CD4-positive, alpha-beta T cell (primary cell): ENCODE measurements at regions of chr3 and their contacts with region 1.

Region 1: DNA sequence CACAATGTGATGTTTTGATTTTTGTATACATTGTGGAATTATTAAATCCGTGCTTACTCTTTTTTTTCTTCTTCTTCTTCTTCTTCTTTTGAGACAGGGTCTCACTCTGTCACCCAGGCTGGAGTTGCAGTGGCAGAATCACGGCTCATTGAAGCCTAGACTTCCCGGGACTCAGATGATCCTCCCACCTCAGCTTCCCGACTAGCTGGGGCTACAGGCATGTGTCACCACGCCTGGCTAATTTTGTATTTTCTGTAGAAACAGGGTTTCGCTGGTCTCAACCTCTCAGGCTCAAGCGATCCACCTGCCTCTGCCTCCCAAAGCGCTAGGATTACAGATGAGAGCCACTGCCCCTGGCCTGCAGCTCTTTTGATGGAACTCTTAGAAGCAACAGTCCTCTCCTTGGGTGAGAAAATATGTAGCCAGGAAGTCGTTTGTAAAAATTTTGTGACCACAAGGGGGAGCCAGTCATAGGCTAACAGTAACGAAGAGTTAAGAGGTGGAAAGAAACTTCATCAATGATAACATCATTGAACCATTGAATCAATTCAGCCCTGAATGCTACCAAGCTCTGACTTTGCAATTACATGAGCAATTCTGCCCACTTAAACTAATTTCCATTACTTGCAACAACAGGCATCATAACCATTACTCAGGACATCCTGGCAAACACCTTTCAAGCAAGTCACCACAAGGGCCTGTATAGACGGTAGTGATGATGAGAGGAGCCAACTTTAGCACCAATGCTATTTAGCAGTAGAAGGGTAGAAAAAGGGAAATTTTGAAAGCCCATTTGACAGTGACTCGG is 16.7 kb upstream of the CMTM7 start:
- DNase-seq: peak in 13 of 14 experiments; percentile 17 to 89 (median 62)
- ATAC-seq: peak; percentile 33
- H3K4me3 ChIP-seq: no peak overlapping the region
- H3K4me3 Mint-ChIP-seq: no peak overlapping the region
- H3K27ac ChIP-seq: no peak overlapping the region
- H3K27ac Mint-ChIP-seq: peak overlapping the region; percentile 76
- H3K4me1 ChIP-seq: peaks cover 32% of the 10 kb centered on the region
- H3K4me1 Mint-ChIP-seq: peaks cover 40% of the 10 kb centered on the region
- H3K27me3 ChIP-seq: no peaks in the 10 kb centered on the region
- H3K27me3 Mint-ChIP-seq: no peaks in the 10 kb centered on the region
- CTCF ChIP-seq: peak; percentile 75

Region 2: DNA sequence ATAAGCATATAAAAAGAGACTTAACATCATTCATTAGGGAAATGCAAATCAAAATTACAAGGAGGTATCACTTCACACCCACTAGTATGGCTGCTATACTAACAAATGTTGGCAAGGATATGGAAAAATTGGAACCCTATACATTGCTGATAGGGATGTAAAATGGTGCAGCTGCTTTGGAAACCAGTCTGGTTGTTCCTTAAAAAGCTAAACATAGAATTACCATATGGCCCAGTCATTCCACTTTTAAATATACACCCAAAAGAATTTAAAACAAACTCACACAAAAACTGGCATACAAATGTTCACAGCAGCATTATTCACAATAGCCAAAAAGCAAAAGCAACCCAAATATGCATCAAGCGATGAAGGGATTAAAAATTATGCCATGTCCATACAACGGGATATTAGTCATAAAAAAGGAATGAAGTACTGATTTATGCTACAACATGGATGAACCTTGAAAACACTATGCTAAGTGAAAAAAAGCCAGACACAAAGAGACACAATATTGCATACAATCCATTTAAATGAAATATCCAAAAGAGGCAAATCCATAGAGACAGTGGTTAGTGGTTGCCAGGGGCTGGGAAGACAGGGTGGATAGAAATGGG is 512.2 kb before region 1 on chr3:
- CTCF ChIA-PET with region 1: no interaction called
- POLR2A ChIA-PET with region 1: no interaction called
- intact Hi-C with region 1: no loop called
- DNase-seq: no peak
- ATAC-seq: no peak
- H3K4me3 ChIP-seq: no peak overlapping the region
- H3K4me3 Mint-ChIP-seq: no peak overlapping the region
- H3K27ac ChIP-seq: no peak overlapping the region
- H3K27ac Mint-ChIP-seq: no peak overlapping the region
- H3K4me1 ChIP-seq: no peaks in the 10 kb centered on the region
- H3K4me1 Mint-ChIP-seq: no peaks in the 10 kb centered on the region
- H3K27me3 ChIP-seq: no peaks in the 10 kb centered on the region
- H3K27me3 Mint-ChIP-seq: no peaks in the 10 kb centered on the region
- CTCF ChIP-seq: no peak

Region 3: DNA sequence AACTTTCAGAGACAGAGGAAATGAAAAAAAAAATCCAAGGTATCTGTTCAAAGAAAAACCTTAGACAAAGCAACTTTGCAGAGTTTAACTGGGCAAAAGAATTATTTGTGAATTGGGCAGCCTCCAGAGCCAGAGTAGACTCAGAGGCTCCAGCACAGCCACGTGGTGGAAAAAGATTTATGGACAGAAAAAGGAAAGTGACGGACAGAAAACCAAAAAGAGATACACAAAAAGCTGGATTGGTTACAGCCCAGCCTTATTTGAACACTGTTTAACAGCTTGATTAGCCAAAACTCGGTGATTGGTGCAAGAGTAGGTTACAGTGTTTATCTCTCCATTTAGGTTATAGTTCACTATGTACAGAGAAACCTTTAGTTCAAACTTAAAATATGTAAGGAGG is 292.3 kb before region 1 on chr3:
- CTCF ChIA-PET with region 1: no interaction called
- POLR2A ChIA-PET with region 1: no interaction called
- intact Hi-C with region 1: no loop called
- DNase-seq: no peak
- ATAC-seq: no peak
- H3K4me3 ChIP-seq: no peak overlapping the region
- H3K4me3 Mint-ChIP-seq: no peak overlapping the region
- H3K27ac ChIP-seq: no peak overlapping the region
- H3K27ac Mint-ChIP-seq: no peak overlapping the region
- H3K4me1 ChIP-seq: no peaks in the 10 kb centered on the region
- H3K4me1 Mint-ChIP-seq: no peaks in the 10 kb centered on the region
- H3K27me3 ChIP-seq: no peaks in the 10 kb centered on the region
- H3K27me3 Mint-ChIP-seq: no peaks in the 10 kb centered on the region
- CTCF ChIP-seq: no peak

Region 4: GRCh38 chr3:32296256-32297204 is 78.5 kb before region 1 on chr3:
- CTCF ChIA-PET with region 1: no interaction called
- POLR2A ChIA-PET with region 1: interaction called, 16 read pairs
- intact Hi-C with region 1: loop called in 1 of 2 experiments (anchors 1 kb)
- DNase-seq: peak; percentile 52 to 88 (median 60)
- ATAC-seq: peak; percentile 62
- H3K4me3 ChIP-seq: no peak overlapping the region
- H3K4me3 Mint-ChIP-seq: peak overlapping the region; percentile 76
- H3K27ac ChIP-seq: peak overlapping the region; percentile 60
- H3K27ac Mint-ChIP-seq: peak overlapping the region; percentile 93
- H3K4me1 ChIP-seq: peaks cover 44% of the 10 kb centered on the region
- H3K4me1 Mint-ChIP-seq: peaks cover 43% of the 10 kb centered on the region
- H3K27me3 ChIP-seq: no peaks in the 10 kb centered on the region
- H3K27me3 Mint-ChIP-seq: no peaks in the 10 kb centered on the region
- CTCF ChIP-seq: peak; percentile 93

Region 5: DNA sequence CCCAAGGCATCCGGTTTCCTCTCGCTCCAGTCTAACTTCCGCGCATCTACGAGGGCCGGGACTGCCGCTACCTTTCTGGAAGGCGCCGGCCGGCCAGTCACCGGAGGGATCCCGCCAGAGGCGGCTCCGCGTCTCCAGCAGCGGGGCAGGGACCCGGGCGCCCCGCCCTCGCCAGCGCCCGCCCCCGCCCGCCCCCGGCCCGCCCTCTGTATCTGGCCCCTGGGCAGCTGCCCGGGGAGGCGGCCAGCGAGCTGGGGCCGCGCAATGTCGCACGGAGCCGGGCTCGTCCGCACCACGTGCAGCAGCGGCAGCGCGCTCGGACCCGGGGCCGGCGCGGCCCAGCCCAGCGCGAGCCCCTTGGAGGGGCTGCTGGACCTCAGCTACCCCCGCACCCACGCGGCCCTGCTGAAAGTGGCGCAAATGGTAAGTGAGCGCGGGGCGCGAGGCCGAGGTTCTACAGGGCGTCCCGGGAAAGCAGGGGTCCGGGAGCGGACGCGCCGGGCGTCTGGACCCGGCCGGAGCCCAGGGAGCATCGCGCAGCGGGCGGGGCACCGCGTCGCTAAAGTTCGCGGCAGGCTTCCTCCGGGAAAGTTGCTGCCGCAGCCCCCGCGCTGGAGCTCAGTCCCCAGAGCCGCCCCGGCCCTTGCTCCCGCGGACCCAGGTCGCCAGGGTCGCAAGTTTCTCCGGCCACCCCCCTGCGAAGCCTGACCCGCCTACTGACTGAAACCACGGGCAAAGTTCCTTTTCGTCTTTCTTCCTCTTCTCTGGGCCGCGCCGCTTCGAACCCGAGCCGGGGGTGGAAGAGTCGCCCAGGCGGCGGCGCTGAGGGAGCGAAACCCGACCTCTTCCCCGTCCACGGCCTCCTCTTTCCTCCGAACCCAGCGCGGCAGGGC is 16.9 kb after region 1 on chr3 and contains the start of gene CMTM7:
- CTCF ChIA-PET with region 1: interaction called, 6 read pairs
- POLR2A ChIA-PET with region 1: interaction called, 26 read pairs
- intact Hi-C with region 1: loop called in 1 of 2 experiments (anchors 2 kb)
- DNase-seq: peak; percentile 32 to 81 (median 52)
- ATAC-seq: peak; percentile 54
- H3K4me3 ChIP-seq: peak within 1 kb of the TSS; percentile 92
- H3K4me3 Mint-ChIP-seq: peak within 1 kb of the TSS; percentile 97
- H3K27ac ChIP-seq: peak within 1 kb of the TSS; percentile 77 to 79
- H3K27ac Mint-ChIP-seq: peak within 1 kb of the TSS; percentile 91
- H3K4me1 ChIP-seq: peaks cover 47% of the 10 kb centered on the region
- H3K4me1 Mint-ChIP-seq: peaks cover 61% of the 10 kb centered on the region
- H3K27me3 ChIP-seq: no peaks in the 10 kb centered on the region
- H3K27me3 Mint-ChIP-seq: no peaks in the 10 kb centered on the region
- CTCF ChIP-seq: no peak
- total RNA-seq, gene CMTM7: 31.5 to 35.2 TPM

Region 6: DNA sequence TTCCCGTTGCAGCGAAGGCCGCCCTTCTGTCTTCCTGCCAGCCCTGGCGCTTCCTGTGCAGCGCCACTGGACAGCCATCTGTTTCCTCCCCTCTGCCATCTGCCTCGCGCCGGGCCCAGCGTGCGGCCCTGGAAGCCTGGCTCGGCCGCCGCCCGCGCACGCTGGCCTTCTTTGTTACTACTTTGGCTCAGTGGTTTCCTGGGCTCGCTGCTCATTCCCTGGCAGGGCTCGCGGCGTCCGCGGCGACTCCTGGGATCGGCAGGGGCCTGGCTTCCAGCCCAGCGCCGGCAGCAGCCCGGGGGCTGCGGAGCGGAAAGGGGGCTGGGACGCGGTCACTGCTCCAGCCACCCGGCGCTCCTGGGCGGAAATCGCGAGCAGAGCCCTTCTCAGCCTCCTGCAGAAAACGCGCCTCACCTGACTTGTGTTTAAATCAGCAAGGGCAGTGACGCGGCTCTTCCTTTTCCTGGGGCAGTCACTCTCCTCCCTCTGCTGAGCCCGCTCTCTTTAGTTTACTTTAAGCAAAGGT is 26.6 kb after region 1 on chr3:
- CTCF ChIA-PET with region 1: interaction called, 5 read pairs
- POLR2A ChIA-PET with region 1: interaction called, 8 read pairs
- intact Hi-C with region 1: loop called in 1 of 2 experiments (anchors 1 kb)
- DNase-seq: peak; percentile 37 to 84 (median 58)
- ATAC-seq: peak; percentile 73
- H3K4me3 ChIP-seq: peak overlapping the region; percentile 65
- H3K4me3 Mint-ChIP-seq: peak overlapping the region; percentile 92
- H3K27ac ChIP-seq: peak overlapping the region; percentile 85 to 92
- H3K27ac Mint-ChIP-seq: peak overlapping the region; percentile 90
- H3K4me1 ChIP-seq: peaks cover 62% of the 10 kb centered on the region
- H3K4me1 Mint-ChIP-seq: peaks cover 77% of the 10 kb centered on the region
- H3K27me3 ChIP-seq: no peaks in the 10 kb centered on the region
- H3K27me3 Mint-ChIP-seq: no peaks in the 10 kb centered on the region
- CTCF ChIP-seq: no peak

Region 7: DNA sequence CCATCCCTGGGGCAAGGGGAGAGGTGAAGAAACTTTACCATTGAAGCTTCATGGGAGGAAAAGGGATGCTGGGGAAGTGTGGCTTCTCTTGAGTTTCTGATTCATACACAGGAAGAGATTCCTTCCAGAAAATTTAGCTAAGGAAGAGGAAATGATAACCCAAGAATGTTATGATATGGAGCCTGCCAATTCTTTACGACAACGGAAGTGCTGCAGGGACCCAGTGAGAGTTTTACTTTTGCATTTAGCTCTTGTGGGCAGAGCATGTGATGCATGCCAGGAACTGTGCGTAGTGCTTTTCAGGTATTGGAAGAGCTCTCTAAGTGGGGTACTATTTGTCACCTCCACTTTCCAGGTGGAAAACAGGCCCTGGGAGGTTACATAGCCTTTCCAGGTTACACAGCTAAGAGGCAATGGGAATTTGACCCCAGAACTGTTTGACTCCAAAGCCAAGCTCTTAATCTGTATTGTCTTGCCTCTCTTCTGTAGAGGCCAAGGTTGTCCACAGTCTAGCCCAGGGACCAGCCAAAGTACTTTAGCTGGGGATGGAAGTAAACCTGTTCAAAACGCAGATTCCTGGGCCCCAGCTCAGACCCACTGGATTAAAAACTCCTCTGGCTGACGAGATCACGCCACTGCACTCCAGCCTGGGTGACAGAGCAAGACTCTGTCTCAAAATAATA is 39.7 kb after region 1 on chr3:
- CTCF ChIA-PET with region 1: no interaction called
- POLR2A ChIA-PET with region 1: interaction called, 13 read pairs
- intact Hi-C with region 1: loop called in 1 of 2 experiments (anchors 5 kb)
- DNase-seq: peak in 10 of 14 experiments; percentile 34 to 86 (median 52)
- ATAC-seq: peak; percentile 95
- H3K4me3 ChIP-seq: no peak overlapping the region
- H3K4me3 Mint-ChIP-seq: peak overlapping the region; percentile 43
- H3K27ac ChIP-seq: peak overlapping the region; percentile 39 to 76
- H3K27ac Mint-ChIP-seq: peak overlapping the region; percentile 95
- H3K4me1 ChIP-seq: peaks cover 41% of the 10 kb centered on the region
- H3K4me1 Mint-ChIP-seq: peaks cover 83% of the 10 kb centered on the region
- H3K27me3 ChIP-seq: no peaks in the 10 kb centered on the region
- H3K27me3 Mint-ChIP-seq: no peaks in the 10 kb centered on the region
- CTCF ChIP-seq: no peak

Region 8: GRCh38 chr3:32428092-32429068 is 53.4 kb after region 1 on chr3:
- CTCF ChIA-PET with region 1: interaction called, 5 read pairs
- POLR2A ChIA-PET with region 1: interaction called, 10 read pairs
- intact Hi-C with region 1: no loop called
- DNase-seq: peak in 12 of 14 experiments; percentile 18 to 81 (median 43)
- ATAC-seq: peak; percentile 58
- H3K4me3 ChIP-seq: peak overlapping the region; percentile 29
- H3K4me3 Mint-ChIP-seq: peak overlapping the region; percentile 80
- H3K27ac ChIP-seq: peak overlapping the region; percentile 73 to 83
- H3K27ac Mint-ChIP-seq: peak overlapping the region; percentile 95
- H3K4me1 ChIP-seq: peaks cover 81% of the 10 kb centered on the region
- H3K4me1 Mint-ChIP-seq: peaks cover 90% of the 10 kb centered on the region
- H3K27me3 ChIP-seq: no peaks in the 10 kb centered on the region
- H3K27me3 Mint-ChIP-seq: no peaks in the 10 kb centered on the region
- CTCF ChIP-seq: no peak

Region 9: GRCh38 chr3:32667122-32667521 is 292.1 kb after region 1 on chr3:
- CTCF ChIA-PET with region 1: interaction called, 3 read pairs
- POLR2A ChIA-PET with region 1: no interaction called
- intact Hi-C with region 1: loop called in 1 of 2 experiments (anchors 10 kb)
- DNase-seq: no peak
- ATAC-seq: no peak
- H3K4me3 ChIP-seq: no peak overlapping the region
- H3K4me3 Mint-ChIP-seq: no peak overlapping the region
- H3K27ac ChIP-seq: no peak overlapping the region
- H3K27ac Mint-ChIP-seq: no peak overlapping the region
- H3K4me1 ChIP-seq: no peaks in the 10 kb centered on the region
- H3K4me1 Mint-ChIP-seq: no peaks in the 10 kb centered on the region
- H3K27me3 ChIP-seq: no peaks in the 10 kb centered on the region
- H3K27me3 Mint-ChIP-seq: peaks cover 3% of the 10 kb centered on the region
- CTCF ChIP-seq: no peak

Region 10: GRCh38 chr3:33229066-33229465 is 854.1 kb after region 1 on chr3:
- CTCF ChIA-PET with region 1: no interaction called
- POLR2A ChIA-PET with region 1: no interaction called
- intact Hi-C with region 1: no loop called
- DNase-seq: no peak
- ATAC-seq: no peak
- H3K4me3 ChIP-seq: no peak overlapping the region
- H3K4me3 Mint-ChIP-seq: no peak overlapping the region
- H3K27ac ChIP-seq: no peak overlapping the region
- H3K27ac Mint-ChIP-seq: no peak overlapping the region
- H3K4me1 ChIP-seq: no peaks in the 10 kb centered on the region
- H3K4me1 Mint-ChIP-seq: no peaks in the 10 kb centered on the region
- H3K27me3 ChIP-seq: peaks cover 0 to 11% of the 10 kb centered on the region in 2 experiments
- H3K27me3 Mint-ChIP-seq: peaks cover 35% of the 10 kb centered on the region
- CTCF ChIP-seq: no peak

Region 11: DNA sequence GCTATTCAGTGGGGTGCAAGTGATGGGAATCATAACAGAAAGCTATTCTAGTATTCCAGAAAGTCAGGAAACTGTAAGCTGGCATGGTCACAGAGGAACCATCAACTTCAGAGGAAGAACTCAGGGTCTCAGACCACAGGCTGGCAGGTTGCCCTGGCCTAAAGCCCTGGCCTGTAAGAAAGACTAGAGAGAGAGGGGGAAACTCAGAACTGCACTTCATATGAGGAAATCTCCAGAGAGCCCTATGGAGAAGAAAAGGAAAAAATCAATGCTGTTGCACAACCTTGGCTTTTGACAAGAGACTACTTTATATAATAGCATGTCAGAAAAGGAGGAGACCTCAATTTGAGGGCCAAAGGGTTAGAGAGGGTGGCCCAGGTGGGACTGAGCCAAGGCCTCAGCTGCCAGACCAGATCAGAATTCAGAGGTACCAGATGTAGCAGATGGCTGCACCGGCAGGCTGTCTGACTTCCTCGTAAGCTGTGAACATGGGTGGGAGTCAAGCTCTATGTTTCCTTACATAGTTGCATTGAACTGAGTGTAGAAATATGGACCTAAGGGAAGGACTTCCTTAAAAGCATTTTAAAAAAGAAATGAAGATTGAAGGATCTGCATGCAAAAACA is 1757.2 kb after region 1 on chr3:
- CTCF ChIA-PET with region 1: no interaction called
- POLR2A ChIA-PET with region 1: no interaction called
- intact Hi-C with region 1: no loop called
- DNase-seq: no peak
- ATAC-seq: no peak
- H3K4me3 ChIP-seq: no peak overlapping the region
- H3K4me3 Mint-ChIP-seq: no peak overlapping the region
- H3K27ac ChIP-seq: no peak overlapping the region
- H3K27ac Mint-ChIP-seq: no peak overlapping the region
- H3K4me1 ChIP-seq: no peaks in the 10 kb centered on the region
- H3K4me1 Mint-ChIP-seq: no peaks in the 10 kb centered on the region
- H3K27me3 ChIP-seq: no peaks in the 10 kb centered on the region
- H3K27me3 Mint-ChIP-seq: no peaks in the 10 kb centered on the region
- CTCF ChIP-seq: no peak